ENCODE measurements at regions of chr1 and their contacts with region 1.

Region 1: GRCh38 chr1:204494281-204495077 is at the start of gene PIK3C2B:
- DNase-seq: peak; percentile 94
- ATAC-seq: peak; percentile 85
- H3K4me3 ChIP-seq: peak within 1 kb of the TSS; percentile 79
- H3K27ac ChIP-seq: peak within 1 kb of the TSS; percentile 68
- H3K4me1 ChIP-seq: peaks cover 30% of the 10 kb centered on the region
- H3K27me3 ChIP-seq: no peaks in the 10 kb centered on the region
- CTCF ChIP-seq: peak; percentile 46; the same call in 1 of the 2 replicates
- total RNA-seq, gene PIK3C2B: 34.7 and 35.3 TPM in 2 replicates

Region 2: DNA sequence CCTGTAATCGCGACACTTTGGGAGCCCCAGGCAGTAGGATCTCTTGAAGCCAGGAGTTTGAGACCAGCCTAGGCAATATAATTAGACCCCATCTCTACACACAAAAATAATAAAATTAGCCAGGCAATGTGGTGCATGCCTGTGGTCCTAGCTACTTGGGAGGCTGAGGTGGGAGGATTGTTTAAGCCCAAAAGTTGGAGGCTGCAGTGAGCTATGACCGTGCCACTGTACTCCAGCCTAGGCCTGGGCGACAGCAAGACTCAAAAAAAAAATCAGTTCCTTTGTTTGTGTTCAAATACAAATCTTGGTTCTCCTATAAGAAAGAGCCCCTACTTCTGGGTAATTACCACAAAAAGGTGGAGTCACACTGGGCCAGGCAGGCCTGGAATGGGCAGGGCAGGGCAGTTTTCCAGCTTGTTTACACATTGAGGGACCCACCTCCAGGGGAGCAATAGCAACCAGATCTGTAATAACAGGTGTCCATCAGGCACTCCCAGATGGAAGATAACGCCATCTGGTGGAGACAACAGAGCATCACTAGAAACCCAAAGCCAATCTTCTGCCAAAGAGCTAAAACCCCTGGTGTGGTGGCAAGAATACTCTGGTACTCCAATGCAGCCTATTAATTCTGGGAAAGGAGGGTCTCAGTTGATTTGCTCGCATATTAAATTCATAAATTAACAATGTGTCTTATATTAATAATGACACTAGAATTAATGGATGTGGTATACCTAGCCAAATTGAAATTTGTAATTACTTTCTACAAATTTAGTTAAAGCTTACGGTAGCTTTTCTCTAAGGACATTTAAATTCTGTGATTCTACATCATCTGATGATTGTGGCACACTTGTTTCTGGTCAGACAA is 96.0 kb before region 1 on chr1:
- CTCF ChIA-PET with region 1: interaction called, 11 read pairs
- POLR2A ChIA-PET with region 1: no interaction called
- intact Hi-C with region 1: no loop called
- DNase-seq: peak; percentile 100
- ATAC-seq: peak; percentile 100
- H3K4me3 ChIP-seq: no peak overlapping the region
- H3K27ac ChIP-seq: no peak overlapping the region
- H3K4me1 ChIP-seq: peaks cover 4% of the 10 kb centered on the region; the same call in 1 of the 2 replicates
- H3K27me3 ChIP-seq: no peaks in the 10 kb centered on the region
- CTCF ChIP-seq: peak; percentile 99

Region 3: DNA sequence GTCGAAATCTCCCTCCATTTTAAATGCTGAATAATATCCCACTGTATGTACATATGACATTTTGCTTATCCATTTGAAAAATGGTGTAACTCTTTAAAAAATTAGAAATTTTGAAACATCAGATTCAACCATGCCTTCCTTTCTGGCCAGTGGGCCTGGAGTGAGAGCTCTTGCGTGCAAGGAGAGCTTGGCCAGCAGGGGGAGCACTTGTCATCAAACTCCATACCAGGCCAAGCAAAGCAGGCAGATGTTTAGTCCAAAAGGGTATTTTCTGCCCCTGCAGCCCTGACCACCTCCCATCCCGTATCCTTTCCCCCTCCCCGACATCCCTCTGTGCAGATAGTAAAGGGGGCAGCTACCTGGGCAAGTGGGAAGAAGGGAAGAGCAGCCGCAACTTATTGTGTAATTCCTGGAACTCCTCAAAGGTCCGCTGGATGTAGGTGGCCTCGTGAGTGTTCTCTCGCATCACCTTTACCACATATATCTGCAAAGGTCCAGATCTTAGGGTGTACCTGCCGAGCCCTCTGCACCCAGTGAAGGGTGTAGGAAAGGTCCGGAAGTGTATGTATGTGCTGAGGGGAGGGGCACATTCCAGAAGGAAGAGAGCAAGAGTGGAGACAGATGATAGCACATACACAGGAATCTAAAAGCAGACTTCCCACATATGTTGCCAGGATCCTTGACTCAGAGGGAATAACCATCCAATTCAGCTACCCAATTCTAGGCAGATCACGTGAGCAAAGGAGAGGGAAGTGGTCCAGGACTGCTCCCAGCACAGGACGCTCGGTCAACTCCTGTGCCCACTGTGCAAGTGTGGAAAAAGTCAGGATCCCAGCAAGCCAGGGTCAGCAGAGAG is 62.9 kb before region 1 on chr1:
- CTCF ChIA-PET with region 1: interaction called, 24 read pairs
- POLR2A ChIA-PET with region 1: interaction called, 3 read pairs
- intact Hi-C with region 1: loop called (anchors 2 kb)
- DNase-seq: peak; percentile 93
- ATAC-seq: peak; percentile 96
- H3K4me3 ChIP-seq: no peak overlapping the region
- H3K27ac ChIP-seq: no peak overlapping the region
- H3K4me1 ChIP-seq: peaks cover 10% of the 10 kb centered on the region
- H3K27me3 ChIP-seq: no peaks in the 10 kb centered on the region
- CTCF ChIP-seq: peak; percentile 100

Region 4: DNA sequence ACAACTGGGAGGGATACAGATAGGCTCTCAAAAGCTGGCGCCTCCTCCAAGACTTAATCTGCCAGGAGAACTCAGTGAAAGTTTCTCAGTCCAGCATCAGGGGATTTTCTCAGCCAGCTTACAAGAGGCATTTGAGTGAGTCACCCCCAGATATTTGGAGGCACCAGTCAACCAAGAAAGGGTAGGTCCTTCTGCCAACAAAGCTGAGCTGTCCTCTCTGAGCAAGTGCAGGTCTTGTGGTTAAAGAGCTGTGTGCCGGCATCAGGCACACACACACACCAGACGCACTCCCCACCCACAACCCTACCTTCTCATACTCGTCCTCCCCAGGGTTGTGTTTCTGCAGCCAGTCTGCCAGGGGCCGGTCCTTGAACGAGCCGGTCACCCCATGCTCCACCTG is 55.9 kb before region 1 on chr1:
- CTCF ChIA-PET with region 1: interaction called, 12 read pairs
- POLR2A ChIA-PET with region 1: interaction called, 8 read pairs
- intact Hi-C with region 1: loop called (anchors 1 kb)
- DNase-seq: peak; percentile 99
- ATAC-seq: peak; percentile 96
- H3K4me3 ChIP-seq: peak overlapping the region; percentile 35; the same call in 1 of the 2 replicates
- H3K27ac ChIP-seq: peak overlapping the region; percentile 73
- H3K4me1 ChIP-seq: peaks cover 43% of the 10 kb centered on the region
- H3K27me3 ChIP-seq: no peaks in the 10 kb centered on the region
- CTCF ChIP-seq: no peak

Region 5: DNA sequence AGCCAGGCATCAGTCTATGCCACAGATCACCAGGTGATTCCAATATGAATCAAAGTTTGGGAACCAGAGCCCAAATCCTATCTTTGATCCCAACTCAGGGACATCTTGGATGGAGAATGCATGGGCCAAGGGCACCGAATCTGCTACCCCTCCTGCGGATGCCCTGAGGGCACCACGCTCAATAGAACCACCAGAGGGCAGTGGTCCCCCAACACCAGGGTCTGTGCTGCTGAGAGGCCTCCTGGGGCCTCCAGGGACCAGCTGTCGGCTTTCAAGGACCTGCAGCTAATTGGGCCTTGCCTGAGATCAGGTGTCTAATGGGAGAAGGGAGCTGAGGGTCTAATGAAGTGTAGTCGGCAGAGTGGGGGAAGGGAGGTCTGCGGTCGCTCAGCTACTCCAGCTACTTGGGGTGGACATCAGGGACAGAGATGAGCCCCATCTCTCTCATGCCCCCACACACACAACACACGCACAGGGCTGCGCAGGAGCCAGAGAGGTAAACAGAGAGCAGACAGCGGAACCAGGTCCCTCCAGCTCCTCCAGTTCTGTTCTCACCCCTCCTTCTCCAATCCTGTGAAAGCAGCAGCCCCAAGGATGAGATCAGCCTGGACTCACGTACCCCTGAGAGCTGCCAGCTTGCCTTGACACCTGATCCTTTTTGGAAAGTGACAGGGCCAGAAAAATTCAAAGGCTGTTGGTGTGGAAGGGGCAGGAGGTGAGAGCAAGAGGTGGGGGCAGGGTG is 47.9 kb before region 1 on chr1:
- CTCF ChIA-PET with region 1: interaction called, 16 read pairs
- POLR2A ChIA-PET with region 1: interaction called, 23 read pairs
- intact Hi-C with region 1: loop called (anchors 1 kb)
- DNase-seq: peak; percentile 76
- ATAC-seq: peak; percentile 6; the same call in 1 of the 2 replicates
- H3K4me3 ChIP-seq: no peak overlapping the region
- H3K27ac ChIP-seq: no peak overlapping the region
- H3K4me1 ChIP-seq: peaks cover 64% of the 10 kb centered on the region
- H3K27me3 ChIP-seq: no peaks in the 10 kb centered on the region
- CTCF ChIP-seq: peak; percentile 68

Region 6: GRCh38 chr1:204465546-204466415 is 28.7 kb before region 1 on chr1:
- CTCF ChIA-PET with region 1: no interaction called
- POLR2A ChIA-PET with region 1: no interaction called
- intact Hi-C with region 1: no loop called
- DNase-seq: no peak
- ATAC-seq: no peak
- H3K4me3 ChIP-seq: no peak overlapping the region
- H3K27ac ChIP-seq: no peak overlapping the region
- H3K4me1 ChIP-seq: no peaks in the 10 kb centered on the region
- H3K27me3 ChIP-seq: no peaks in the 10 kb centered on the region
- CTCF ChIP-seq: no peak